ENCODE measurements at regions of chr10 and their contacts with region 1.

Region 1: DNA sequence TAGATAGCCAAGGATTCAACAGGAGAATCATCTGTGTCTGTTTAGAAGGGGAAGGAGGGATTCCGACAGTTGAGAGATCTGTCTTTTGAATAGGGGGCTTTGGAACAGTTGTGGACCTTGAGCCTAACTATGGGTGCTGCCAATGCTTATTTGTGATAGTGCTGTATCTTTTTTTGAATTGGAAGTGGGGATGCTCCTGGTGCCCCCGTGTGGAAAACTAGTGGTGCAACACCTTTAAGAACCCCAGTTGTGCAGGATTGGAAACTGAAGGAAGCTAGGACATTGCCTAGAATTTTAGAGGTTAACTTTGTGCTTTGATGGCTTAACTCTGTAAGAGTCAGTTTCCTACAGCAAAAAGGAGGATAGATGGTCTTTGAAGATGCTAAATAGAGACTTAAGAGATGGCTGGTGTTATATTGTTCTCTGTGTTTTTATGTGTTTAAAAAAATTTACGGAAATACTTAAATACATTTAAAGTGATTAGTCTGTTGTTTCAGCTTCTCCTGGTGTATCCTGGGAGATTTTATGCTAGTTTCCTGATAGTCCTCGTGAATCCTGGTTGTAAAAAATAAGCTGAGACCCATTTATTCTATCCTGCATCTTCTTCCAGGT is 69.3 kb downstream of the AP3M1 start:
- DNase-seq: peak in 1 of 2 donors; percentile 35
- ATAC-seq: peak; percentile 45 to 66
- H3K4me3 ChIP-seq: no peak overlapping the region
- H3K27ac ChIP-seq: peak overlapping the region; percentile 9 to 71 (median 50)
- H3K4me1 ChIP-seq: peaks cover 11 to 24% of the 10 kb centered on the region in 2 donors
- H3K27me3 ChIP-seq: no peaks in the 10 kb centered on the region
- CTCF ChIP-seq: peak; percentile 55 to 77 (median 72)
- POLR2A ChIP-seq: no peak

Region 2: DNA sequence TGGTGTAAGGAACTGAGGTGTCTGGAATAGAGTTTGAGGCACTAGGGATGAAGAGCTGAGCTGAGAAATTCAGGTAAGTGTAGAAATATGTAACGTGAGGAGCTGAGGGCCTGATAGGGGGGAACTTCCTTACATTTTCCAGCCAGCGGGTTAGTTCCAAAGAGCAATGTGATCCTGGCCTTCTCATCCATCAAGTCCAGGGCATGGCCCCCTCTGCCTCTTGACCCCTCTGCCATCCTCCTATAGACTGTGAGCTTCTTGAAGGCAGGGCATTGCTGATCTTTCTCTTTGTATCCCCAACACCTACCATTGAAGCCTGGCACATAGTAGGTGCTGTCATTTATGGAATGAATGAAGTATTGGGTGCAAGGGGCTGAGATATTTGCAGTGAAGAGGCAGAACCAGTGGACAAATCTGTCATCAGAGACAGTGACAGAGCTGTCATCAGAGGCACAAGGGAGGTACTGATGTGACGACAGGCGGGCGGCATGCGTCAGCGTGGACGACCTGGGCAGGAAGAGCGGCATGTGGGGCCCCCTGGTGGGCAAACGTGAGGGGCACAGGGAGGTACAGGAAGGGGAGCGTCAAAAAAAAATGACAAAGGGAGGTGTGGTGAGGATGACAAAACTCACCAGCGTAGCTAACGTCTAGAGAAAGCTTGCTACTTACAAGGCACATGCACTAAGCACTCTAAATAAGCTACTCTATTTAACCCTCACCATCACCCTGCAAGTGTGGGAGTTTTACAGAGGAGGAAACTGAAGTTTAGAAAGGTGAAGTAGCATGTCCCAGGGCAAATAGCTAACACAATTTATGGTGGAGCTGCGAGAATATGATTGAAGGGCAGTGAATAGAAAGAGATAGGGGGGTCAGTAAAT is 201.8 kb before region 1 on chr10:
- in situ Hi-C with region 1: loop called in 3 of 4 experiments (anchors 10 kb)
- intact Hi-C with region 1: no loop called
- DNase-seq: peak; percentile 69 to 84
- ATAC-seq: peak; percentile 76 to 77
- H3K4me3 ChIP-seq: no peak overlapping the region
- H3K27ac ChIP-seq: peak overlapping the region in 3 of 4 donors; percentile 45 to 55 (median 47)
- H3K4me1 ChIP-seq: peaks cover 16 to 23% of the 10 kb centered on the region in 2 donors
- H3K27me3 ChIP-seq: no peaks in the 10 kb centered on the region
- CTCF ChIP-seq: peak; percentile 88 to 98 (median 97)
- POLR2A ChIP-seq: no peak

Region 3: GRCh38 chr10:73940634-73941221 is 140.6 kb before region 1 on chr10:
- in situ Hi-C with region 1: no loop called
- intact Hi-C with region 1: loop called (anchors 2 kb)
- DNase-seq: peak; percentile 63 to 79
- ATAC-seq: peak; percentile 86 to 90
- H3K4me3 ChIP-seq: peak overlapping the region in 3 of 4 donors; percentile 13 to 39 (median 30)
- H3K27ac ChIP-seq: peak overlapping the region; percentile 69 to 82 (median 80)
- H3K4me1 ChIP-seq: peaks cover 29 to 42% of the 10 kb centered on the region in 2 donors
- H3K27me3 ChIP-seq: no peaks in the 10 kb centered on the region
- CTCF ChIP-seq: peak; percentile 85 to 96 (median 95)
- POLR2A ChIP-seq: no peak

Region 4: DNA sequence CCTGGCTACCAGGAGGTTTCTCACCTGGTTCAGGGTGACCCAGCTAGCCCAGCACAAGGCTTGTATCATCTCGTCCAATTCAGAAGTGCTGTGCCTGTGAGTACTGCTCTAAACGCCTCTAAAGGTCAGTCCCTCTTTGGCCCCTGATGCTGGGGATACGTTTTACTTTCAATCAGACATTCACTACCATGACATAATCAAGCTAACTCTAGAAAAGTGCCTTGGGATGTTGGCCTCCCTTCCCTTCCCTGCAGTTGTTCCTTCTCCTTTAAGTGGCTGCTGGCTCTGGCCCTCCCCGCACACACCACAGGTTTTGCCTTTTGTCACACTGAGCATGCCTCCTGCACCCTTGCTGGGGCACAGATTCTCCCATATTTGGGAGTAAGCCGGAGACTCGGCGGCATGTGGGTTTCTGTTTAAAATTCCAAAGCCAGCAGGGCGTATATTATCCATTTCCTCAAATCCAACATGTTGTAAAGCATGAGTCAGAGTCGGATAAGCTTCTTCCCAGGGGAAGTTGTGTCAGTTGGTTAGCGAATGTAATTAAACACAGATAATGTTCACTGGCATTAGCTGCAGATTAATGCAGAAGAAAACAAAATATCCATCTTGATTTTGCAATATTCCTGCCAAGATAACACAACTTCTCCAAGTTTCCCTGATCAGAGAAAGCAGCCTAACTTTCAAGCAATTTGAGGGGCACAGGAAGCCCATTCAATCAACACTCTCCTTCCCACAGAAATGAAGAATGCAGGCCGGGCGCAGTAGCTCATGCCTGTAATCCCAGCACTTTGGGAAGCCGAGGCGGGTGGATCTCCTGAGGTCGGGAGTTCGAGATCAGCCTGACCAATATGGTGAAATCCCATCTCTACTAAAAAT is 115.2 kb before region 1 on chr10:
- in situ Hi-C with region 1: loop called in 1 of 4 experiments (anchors 10 kb)
- intact Hi-C with region 1: no loop called
- DNase-seq: peak; percentile 52 to 67
- ATAC-seq: peak; percentile 86 to 92
- H3K4me3 ChIP-seq: peak overlapping the region in 3 of 4 donors; percentile 24 to 26 (median 25)
- H3K27ac ChIP-seq: peak overlapping the region; percentile 68 to 76 (median 76)
- H3K4me1 ChIP-seq: peaks cover 0 to 21% of the 10 kb centered on the region in 2 donors
- H3K27me3 ChIP-seq: no peaks in the 10 kb centered on the region
- CTCF ChIP-seq: no peak
- POLR2A ChIP-seq: peak; percentile 26 to 43

Region 5: GRCh38 chr10:74058658-74059057 is 22.6 kb before region 1 on chr10:
- in situ Hi-C with region 1: no loop called
- intact Hi-C with region 1: no loop called
- DNase-seq: no peak
- ATAC-seq: peak; percentile 22 to 49
- H3K4me3 ChIP-seq: no peak overlapping the region
- H3K27ac ChIP-seq: peak overlapping the region; percentile 93 to 97 (median 95)
- H3K4me1 ChIP-seq: peaks cover 47 to 59% of the 10 kb centered on the region in 2 donors
- H3K27me3 ChIP-seq: no peaks in the 10 kb centered on the region
- CTCF ChIP-seq: no peak
- POLR2A ChIP-seq: no peak

Region 6: GRCh38 chr10:74213571-74214162 is 132.4 kb after region 1 on chr10:
- in situ Hi-C with region 1: no loop called
- intact Hi-C with region 1: no loop called
- DNase-seq: no peak
- ATAC-seq: no peak
- H3K4me3 ChIP-seq: no peak overlapping the region
- H3K27ac ChIP-seq: no peak overlapping the region
- H3K4me1 ChIP-seq: peaks cover 7 to 20% of the 10 kb centered on the region in 2 donors
- H3K27me3 ChIP-seq: no peaks in the 10 kb centered on the region
- CTCF ChIP-seq: peak in 2 of 5 experiments; percentile 9 to 27
- POLR2A ChIP-seq: no peak

Measured in gastrocnemius medialis (tissue), 4 donors.